CD4-positive, alpha-beta T cell (primary cell): ENCODE measurements at regions of chr13 and their contacts with region 1.

Region 1: DNA sequence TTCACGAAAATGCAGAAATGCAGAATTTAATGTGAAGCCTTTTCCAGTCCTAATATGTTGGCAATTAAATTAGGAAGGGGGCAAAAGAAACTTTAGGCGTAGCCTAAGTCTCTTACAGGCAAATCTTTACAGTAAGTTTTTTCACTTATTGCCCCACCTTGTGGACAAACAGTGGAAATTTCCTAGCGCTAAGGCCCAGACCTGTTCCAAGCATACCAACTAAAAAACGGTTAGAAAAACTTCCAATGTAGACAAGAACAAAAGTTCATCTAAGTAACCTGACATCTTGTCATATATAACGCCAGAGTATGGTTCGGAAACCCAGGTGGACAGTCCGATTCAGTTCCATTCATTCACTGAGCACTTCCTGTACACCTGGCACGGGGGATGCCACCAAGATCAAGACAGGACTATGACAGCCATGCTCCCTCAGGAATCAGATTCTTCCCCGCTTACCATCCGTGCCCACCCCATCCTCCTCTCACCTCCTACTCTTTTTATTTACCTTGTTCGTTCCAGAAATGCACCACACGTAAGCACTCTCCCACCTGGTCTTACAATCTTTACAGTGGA is 4.9 kb downstream of the ZAR1L start:
- DNase-seq: peak in 5 of 14 experiments; percentile 1 to 69 (median 61)
- ATAC-seq: peak; percentile 59
- H3K4me3 ChIP-seq: peak overlapping the region; percentile 9
- H3K4me3 Mint-ChIP-seq: peak overlapping the region; percentile 13
- H3K27ac ChIP-seq: no peak overlapping the region
- H3K27ac Mint-ChIP-seq: no peak overlapping the region
- H3K4me1 ChIP-seq: peaks cover 12% of the 10 kb centered on the region
- H3K4me1 Mint-ChIP-seq: peaks cover 22% of the 10 kb centered on the region
- H3K27me3 ChIP-seq: no peaks in the 10 kb centered on the region
- H3K27me3 Mint-ChIP-seq: no peaks in the 10 kb centered on the region
- CTCF ChIP-seq: peak; percentile 72

Region 2: DNA sequence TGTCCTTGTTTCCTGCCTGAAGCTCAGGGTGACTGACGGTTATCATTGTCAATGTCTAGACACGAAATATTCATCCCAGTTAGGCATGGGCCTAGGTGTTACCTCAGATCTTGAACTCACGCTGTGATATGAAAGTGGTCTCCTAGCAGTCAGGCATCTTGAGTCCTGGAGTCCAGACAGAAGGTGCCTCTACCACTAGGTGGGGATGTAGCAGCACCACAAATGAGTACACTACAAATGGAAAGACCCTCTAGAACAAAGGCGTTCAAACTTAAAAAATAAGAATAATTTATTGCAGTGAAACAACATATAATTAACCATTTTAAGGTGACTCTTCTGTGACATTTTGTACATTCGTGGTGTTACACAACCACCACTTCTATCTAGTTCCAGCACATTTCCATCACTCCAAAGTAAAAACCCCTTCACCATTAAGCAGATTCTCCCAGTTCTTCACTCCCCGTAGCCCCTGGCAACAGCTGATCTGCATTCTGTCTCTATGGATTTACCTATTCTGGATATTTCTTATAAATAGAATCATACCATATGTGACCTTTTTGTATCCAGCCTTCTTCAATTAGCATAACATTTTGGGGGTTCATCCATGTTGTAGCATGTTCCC is 290.5 kb before region 1 on chr13:
- CTCF ChIA-PET with region 1: no interaction called
- POLR2A ChIA-PET with region 1: no interaction called
- intact Hi-C with region 1: loop called (anchors 1 to 2 kb)
- DNase-seq: peak in 9 of 14 experiments; percentile 2 to 62 (median 21)
- ATAC-seq: peak; percentile 68
- H3K4me3 ChIP-seq: no peak overlapping the region
- H3K4me3 Mint-ChIP-seq: no peak overlapping the region
- H3K27ac ChIP-seq: no peak overlapping the region
- H3K27ac Mint-ChIP-seq: no peak overlapping the region
- H3K4me1 ChIP-seq: no peaks in the 10 kb centered on the region
- H3K4me1 Mint-ChIP-seq: no peaks in the 10 kb centered on the region
- H3K27me3 ChIP-seq: no peaks in the 10 kb centered on the region
- H3K27me3 Mint-ChIP-seq: no peaks in the 10 kb centered on the region
- CTCF ChIP-seq: peak; percentile 51

Region 3: DNA sequence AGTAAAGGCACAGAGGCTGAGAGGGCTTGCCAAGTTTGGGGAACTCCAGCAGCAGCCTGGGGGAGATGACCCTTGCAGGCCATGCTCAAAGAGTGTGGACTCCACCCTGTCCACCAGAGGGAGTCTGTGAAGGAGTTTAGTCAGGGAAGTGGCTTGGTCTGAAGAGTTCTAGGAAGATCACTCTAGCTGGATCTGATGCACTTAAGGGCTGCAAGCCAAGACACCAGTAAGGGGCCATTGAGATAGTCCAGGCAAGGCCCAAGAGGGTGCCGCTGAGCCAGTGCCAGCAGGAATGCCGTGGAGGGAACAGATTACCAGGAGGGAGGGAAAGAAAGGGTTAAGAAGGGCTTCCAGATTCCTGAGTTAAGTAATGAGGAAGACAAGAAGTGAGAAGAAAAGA is 63.8 kb before region 1 on chr13:
- CTCF ChIA-PET with region 1: no interaction called
- POLR2A ChIA-PET with region 1: no interaction called
- intact Hi-C with region 1: loop called in 1 of 2 experiments (anchors 2 kb)
- DNase-seq: peak in 6 of 14 experiments; percentile 1 to 53 (median 24)
- ATAC-seq: peak; percentile 43
- H3K4me3 ChIP-seq: no peak overlapping the region
- H3K4me3 Mint-ChIP-seq: no peak overlapping the region
- H3K27ac ChIP-seq: no peak overlapping the region
- H3K27ac Mint-ChIP-seq: no peak overlapping the region
- H3K4me1 ChIP-seq: no peaks in the 10 kb centered on the region
- H3K4me1 Mint-ChIP-seq: no peaks in the 10 kb centered on the region
- H3K27me3 ChIP-seq: no peaks in the 10 kb centered on the region
- H3K27me3 Mint-ChIP-seq: no peaks in the 10 kb centered on the region
- CTCF ChIP-seq: peak; percentile 42

Region 4: GRCh38 chr13:33349986-33350826 is 1040.0 kb after region 1 on chr13:
- CTCF ChIA-PET with region 1: no interaction called
- POLR2A ChIA-PET with region 1: no interaction called
- intact Hi-C with region 1: no loop called
- DNase-seq: peak in 1 of 14 experiments; percentile 8
- ATAC-seq: no peak
- H3K4me3 ChIP-seq: peak overlapping the region; percentile 7
- H3K4me3 Mint-ChIP-seq: no peak overlapping the region
- H3K27ac ChIP-seq: no peak overlapping the region
- H3K27ac Mint-ChIP-seq: no peak overlapping the region
- H3K4me1 ChIP-seq: no peaks in the 10 kb centered on the region
- H3K4me1 Mint-ChIP-seq: peaks cover 4% of the 10 kb centered on the region
- H3K27me3 ChIP-seq: peaks cover 19 to 44% of the 10 kb centered on the region in 2 experiments
- H3K27me3 Mint-ChIP-seq: peaks cover 69% of the 10 kb centered on the region
- CTCF ChIP-seq: no peak